Heart right ventricle (tissue), 16 donors: ENCODE measurements at regions of chr22 and their contacts with region 1.

Region 1: GRCh38 chr22:19479357-19480172 is at the start of gene CDC45:
- DNase-seq: peak; percentile 93 to 98
- ATAC-seq: peak; percentile 95 to 99 (median 98)
- H3K4me3 ChIP-seq: peak within 1 kb of the TSS; percentile 58 to 95 (median 86)
- H3K27ac ChIP-seq: peak within 1 kb of the TSS; percentile 93 to 100 (median 98)
- H3K4me1 ChIP-seq: peaks cover 3 to 45% (median 31%) of the 10 kb centered on the region in 9 donors
- H3K27me3 ChIP-seq: no peaks in the 10 kb centered on the region
- CTCF ChIP-seq: no peak
- total RNA-seq, gene CDC45: 0.21 to 3.4 (median 0.69) TPM in 6 of 10 donors, not detected in the others

Region 2: DNA sequence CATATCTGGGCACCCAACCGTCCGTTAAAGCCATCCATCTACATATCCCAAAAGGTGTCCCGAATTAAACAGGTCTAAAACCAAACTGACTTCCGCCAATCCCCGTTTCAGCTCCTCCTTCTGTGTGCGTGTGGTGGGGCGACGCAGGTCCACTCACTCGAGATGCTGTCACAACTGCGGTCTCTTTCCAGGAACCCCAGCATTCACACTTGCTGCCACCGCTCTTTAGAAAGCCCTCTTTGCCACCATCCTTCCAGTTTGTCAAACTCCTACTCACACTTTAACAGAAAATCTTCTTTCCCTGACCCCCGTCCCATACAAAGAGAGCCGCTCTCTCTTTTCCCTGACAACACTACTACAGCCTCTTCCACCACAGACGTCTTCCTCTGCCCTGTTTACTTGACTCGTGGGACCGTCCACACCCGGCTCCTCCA is 335.6 kb before region 1 on chr22:
- intact Hi-C with region 1: loop called in 2 of 10 experiments (anchors 1 to 10 kb)
- DNase-seq: no peak
- ATAC-seq: peak in 1 of 8 donors; percentile 2
- H3K4me3 ChIP-seq: peak overlapping the region; percentile 69 to 98 (median 84)
- H3K27ac ChIP-seq: peak overlapping the region in 9 of 10 donors; percentile 56 to 87 (median 73)
- H3K4me1 ChIP-seq: peaks cover under 1 to 18% (median 13%) of the 10 kb centered on the region in 9 donors
- H3K27me3 ChIP-seq: peaks cover 9 to 22% (median 12%) of the 10 kb centered on the region in 7 donors
- CTCF ChIP-seq: no peak

Region 3: DNA sequence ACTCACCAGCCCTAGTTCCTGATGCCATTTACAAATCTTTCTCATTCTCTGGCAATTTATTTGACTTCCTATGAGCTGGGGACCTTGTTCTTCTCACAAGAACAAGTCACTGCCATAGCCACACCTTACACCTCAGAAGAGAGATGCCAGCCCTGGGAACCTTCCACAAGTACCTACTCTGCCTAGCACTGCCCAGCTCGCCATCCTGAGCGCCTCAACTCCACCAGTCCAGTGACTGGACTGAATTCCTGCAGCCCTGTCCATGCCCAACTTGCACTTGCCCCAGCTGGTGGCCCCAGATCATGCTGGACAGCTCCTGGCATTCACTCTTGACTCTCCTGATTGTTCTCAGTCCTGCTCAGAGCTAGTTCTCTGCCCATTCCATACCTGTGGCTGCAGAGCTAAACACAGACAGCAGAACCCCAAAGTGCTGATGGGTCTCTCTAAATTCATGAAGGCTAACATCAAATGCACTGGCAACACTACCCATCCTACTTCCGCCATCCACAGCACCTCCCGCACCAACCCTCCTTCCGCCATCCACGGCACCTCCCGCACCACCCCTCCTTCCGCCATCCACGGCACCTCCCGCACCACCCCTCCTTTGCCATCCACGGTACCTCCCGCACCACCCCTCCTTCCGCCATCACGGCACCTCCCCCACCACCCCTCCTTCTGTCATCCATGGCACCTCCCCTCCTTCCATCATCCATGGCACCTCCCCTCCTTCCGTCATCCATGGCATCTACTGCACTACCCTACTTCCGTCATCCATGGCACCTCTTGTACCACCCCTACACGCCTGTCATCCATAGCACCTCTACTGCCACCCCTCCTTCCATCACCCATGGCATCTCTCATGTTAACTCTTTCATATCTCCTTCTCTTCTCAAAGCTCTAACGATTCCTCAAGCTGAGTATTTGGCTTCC is 277.4 kb before region 1 on chr22:
- intact Hi-C with region 1: loop called in 1 of 10 experiments (anchors 10 kb)
- DNase-seq: no peak
- ATAC-seq: peak in 4 of 8 donors; percentile 39 to 71 (median 60)
- H3K4me3 ChIP-seq: no peak overlapping the region
- H3K27ac ChIP-seq: no peak overlapping the region
- H3K4me1 ChIP-seq: no peaks in the 10 kb centered on the region
- H3K27me3 ChIP-seq: no peaks in the 10 kb centered on the region
- CTCF ChIP-seq: no peak

Region 4: DNA sequence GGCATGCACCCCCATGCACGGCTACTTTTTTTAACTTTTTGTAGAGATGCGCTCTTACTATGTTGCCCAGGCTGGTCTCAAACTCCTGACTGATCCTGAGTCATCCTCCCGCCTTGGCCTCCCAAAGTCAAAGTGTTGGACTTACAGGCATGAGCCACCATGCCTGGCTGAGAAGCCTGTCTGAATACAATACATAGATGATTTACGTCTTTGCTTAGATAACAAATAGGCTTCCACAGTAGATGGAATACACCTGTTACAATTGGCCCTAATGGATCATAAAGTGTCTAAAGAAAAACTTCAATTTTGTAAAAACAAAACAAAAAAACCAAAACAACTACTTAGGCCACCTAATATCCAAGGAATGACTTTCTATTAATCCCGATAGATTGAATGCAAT is 175.0 kb before region 1 on chr22:
- intact Hi-C with region 1: loop called in 2 of 10 experiments (anchors 10 kb)
- DNase-seq: no peak
- ATAC-seq: no peak
- H3K4me3 ChIP-seq: no peak overlapping the region
- H3K27ac ChIP-seq: no peak overlapping the region
- H3K4me1 ChIP-seq: no peaks in the 10 kb centered on the region
- H3K27me3 ChIP-seq: no peaks in the 10 kb centered on the region
- CTCF ChIP-seq: no peak

Region 5: GRCh38 chr22:19432133-19432851 is 47.3 kb before region 1 on chr22 and contains the start of gene MRPL40:
- intact Hi-C with region 1: loop called in 5 of 10 experiments (anchors 1 to 5 kb)
- DNase-seq: peak; percentile 95 to 96
- ATAC-seq: peak; percentile 96 to 98 (median 98)
- H3K4me3 ChIP-seq: peak within 1 kb of the TSS; percentile 65 to 94 (median 84)
- H3K27ac ChIP-seq: peak within 1 kb of the TSS; percentile 89 to 99 (median 98)
- H3K4me1 ChIP-seq: peaks cover 7 to 55% (median 34%) of the 10 kb centered on the region in 9 donors
- H3K27me3 ChIP-seq: no peaks in the 10 kb centered on the region
- CTCF ChIP-seq: peak in 3 of 9 donors; percentile 18 to 37 (median 29)
- total RNA-seq, gene MRPL40: 49.2 to 89.9 (median 54.9) TPM

Region 6: GRCh38 chr22:19447388-19448075 is 32.0 kb before region 1 on chr22 and contains the start of gene C22orf39:
- intact Hi-C with region 1: loop called in 1 of 10 experiments (anchors 1 kb)
- DNase-seq: peak; percentile 86 to 95
- ATAC-seq: peak; percentile 92 to 97 (median 96)
- H3K4me3 ChIP-seq: peak within 1 kb of the TSS; percentile 64 to 97 (median 91)
- H3K27ac ChIP-seq: peak within 1 kb of the TSS; percentile 87 to 97 (median 93)
- H3K4me1 ChIP-seq: peaks cover 20 to 52% (median 37%) of the 10 kb centered on the region in 9 donors
- H3K27me3 ChIP-seq: no peaks in the 10 kb centered on the region
- CTCF ChIP-seq: no peak
- total RNA-seq, gene C22orf39: 47.7 to 123 (median 66.2) TPM

Region 7: DNA sequence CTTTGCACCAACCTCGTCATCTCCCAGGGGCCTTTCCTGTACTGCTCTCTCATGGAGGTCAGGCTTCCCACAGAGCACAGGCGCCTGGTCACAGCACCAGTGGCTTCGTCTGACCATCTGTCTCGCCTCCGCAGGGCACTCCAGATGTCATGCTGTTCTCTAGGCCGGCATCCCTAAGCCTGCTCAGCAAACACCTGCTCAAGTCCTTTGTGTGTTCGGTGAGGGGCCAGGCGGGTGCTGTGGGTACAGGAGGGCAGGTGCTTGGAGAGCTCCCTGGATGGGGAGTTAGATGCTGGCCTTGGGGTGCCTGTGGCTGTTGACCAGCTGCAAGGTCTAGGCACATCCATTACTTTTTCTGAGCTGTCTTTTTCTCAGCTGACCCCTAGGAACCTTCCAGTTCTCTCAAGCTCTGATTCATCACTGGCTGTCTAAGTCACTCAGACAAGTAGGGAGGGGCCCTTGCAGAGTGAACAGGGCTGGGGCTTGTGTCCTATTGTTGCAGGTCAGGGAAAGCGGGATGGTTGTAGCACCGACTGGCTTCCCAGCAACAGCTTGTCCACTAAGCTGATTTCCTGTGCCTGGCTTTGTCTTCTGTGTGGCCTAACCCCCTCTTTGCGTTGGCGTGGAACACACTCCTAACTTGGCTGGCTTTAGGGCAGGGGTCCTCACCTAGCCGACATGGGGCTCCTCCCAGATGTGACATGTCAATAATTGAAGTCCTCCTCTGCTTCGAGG is 35.4 kb after region 1 on chr22:
- intact Hi-C with region 1: no loop called
- DNase-seq: no peak
- ATAC-seq: no peak
- H3K4me3 ChIP-seq: no peak overlapping the region
- H3K27ac ChIP-seq: no peak overlapping the region
- H3K4me1 ChIP-seq: peaks cover 0 to 11% (median 0%) of the 10 kb centered on the region in 9 donors
- H3K27me3 ChIP-seq: no peaks in the 10 kb centered on the region
- CTCF ChIP-seq: no peak